Psoas muscle (tissue), 8 donors: ENCODE measurements at regions of chr6 and their contacts with region 1.

Region 1: GRCh38 chr6:43547222-43547621 is 28.6 kb downstream of the XPO5 start:
- DNase-seq: no peak
- ATAC-seq: no peak
- H3K4me3 ChIP-seq: no peak overlapping the region
- H3K27ac ChIP-seq: no peak overlapping the region
- H3K4me1 ChIP-seq: no peaks in the 10 kb centered on the region
- H3K27me3 ChIP-seq: no peaks in the 10 kb centered on the region
- CTCF ChIP-seq: no peak

Region 2: GRCh38 chr6:43584892-43585570 is 37.8 kb after region 1 on chr6:
- intact Hi-C with region 1: loop called in 1 of 2 experiments (anchors 2 kb)
- DNase-seq: no peak
- ATAC-seq: no peak
- H3K4me3 ChIP-seq: no peak overlapping the region
- H3K27ac ChIP-seq: no peak overlapping the region
- H3K4me1 ChIP-seq: no peaks in the 10 kb centered on the region
- H3K27me3 ChIP-seq: no peaks in the 10 kb centered on the region
- CTCF ChIP-seq: no peak

Region 3: GRCh38 chr6:43779852-43780236 is 232.6 kb after region 1 on chr6:
- intact Hi-C with region 1: no loop called
- DNase-seq: no peak
- ATAC-seq: peak in 1 of 4 donors; percentile 6
- H3K4me3 ChIP-seq: no peak overlapping the region
- H3K27ac ChIP-seq: peak overlapping the region; percentile 99
- H3K4me1 ChIP-seq: peaks cover 56% of the 10 kb centered on the region
- H3K27me3 ChIP-seq: no peaks in the 10 kb centered on the region
- CTCF ChIP-seq: no peak